HEK293 (cell line): ENCODE measurements at regions of chr18 and their contacts with region 1.

Region 1: GRCh38 chr18:48997985-48998831 is 47.4 kb upstream of the SMAD7 start:
- H3K4me3 ChIP-seq: peak overlapping the region; percentile 5
- H3K27ac ChIP-seq: peak overlapping the region; percentile 73
- H3K4me1 ChIP-seq: peaks cover 38% of the 10 kb centered on the region
- CTCF ChIP-seq: no peak

Region 2: GRCh38 chr18:48940854-48941611 is 57.2 kb before region 1 on chr18:
- CTCF ChIA-PET with region 1: interaction called, 3 read pairs
- POLR2A ChIA-PET with region 1: interaction called, 252 read pairs
- H3K4me3 ChIP-seq: peak overlapping the region; percentile 25
- H3K27ac ChIP-seq: peak overlapping the region; percentile 99
- H3K4me1 ChIP-seq: peaks cover 74% of the 10 kb centered on the region
- CTCF ChIP-seq: no peak

Region 3: DNA sequence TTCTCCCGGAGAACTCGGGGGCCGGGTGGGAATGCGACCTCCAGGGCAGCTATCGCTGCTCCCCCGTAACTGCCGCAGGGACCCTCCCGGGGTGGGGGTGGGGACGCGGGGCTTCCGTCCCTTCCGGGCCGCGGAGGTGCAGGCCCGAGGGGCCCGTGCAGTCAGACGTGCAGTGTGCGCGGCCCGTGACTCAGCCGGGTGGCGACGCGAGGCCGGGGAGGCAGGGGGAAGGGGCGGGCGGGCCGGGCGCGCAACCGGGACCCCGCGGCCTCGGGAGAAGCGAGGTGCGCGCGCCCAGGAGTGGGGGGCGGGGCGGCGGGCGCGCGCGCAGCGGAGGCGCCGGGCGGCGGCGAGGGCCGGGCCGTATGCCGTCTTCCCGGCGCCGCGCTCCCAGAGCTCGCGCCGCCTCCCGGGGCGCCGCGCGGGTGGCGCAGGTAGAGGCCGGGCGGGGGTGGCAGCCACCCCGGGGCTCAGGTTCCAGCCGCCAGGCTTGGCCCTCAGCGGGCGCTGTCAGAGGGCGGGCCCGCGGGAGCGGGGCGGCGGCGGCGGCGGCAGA is 22.5 kb before region 1 on chr18:
- CTCF ChIA-PET with region 1: interaction called, 4 read pairs
- POLR2A ChIA-PET with region 1: interaction called, 13 read pairs
- H3K4me3 ChIP-seq: peak overlapping the region; percentile 41
- H3K27ac ChIP-seq: peak overlapping the region; percentile 97
- H3K4me1 ChIP-seq: peaks cover 12% of the 10 kb centered on the region
- CTCF ChIP-seq: no peak

Region 4: DNA sequence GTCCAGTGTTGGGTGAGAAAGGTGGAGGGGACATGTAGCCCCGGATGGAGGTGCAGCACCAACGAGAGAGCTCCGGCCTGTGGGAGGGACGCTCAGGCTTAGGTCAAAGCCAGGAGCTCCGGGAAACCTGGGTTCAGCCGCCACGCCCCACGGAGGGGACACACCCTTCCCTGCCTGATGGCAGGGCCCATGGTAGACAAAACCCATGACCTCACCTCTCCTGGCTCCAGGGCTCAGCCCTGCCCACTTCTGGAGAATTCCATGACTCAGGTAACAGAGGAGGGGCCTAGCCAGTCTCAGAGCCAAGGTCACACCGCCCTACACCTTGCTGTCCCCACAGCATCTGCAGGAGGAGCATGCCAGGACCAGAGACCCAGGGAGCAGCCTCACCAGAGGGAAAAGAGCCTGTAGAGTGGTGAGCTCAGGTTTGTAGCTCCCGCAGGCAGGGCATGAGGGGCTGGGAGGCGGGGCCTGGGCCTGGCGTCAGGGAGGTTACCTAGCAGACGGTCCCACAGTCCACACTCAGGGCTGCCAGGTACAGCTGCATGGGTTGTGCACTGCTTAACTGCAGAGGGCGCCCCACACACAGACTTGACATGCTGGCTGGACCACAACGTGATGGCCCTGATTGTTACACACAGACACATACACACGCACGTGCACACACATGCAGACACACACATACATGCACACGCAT is 23.4 kb after region 1 on chr18:
- CTCF ChIA-PET with region 1: interaction called, 6 read pairs
- POLR2A ChIA-PET with region 1: interaction called, 27 read pairs
- H3K4me3 ChIP-seq: peak overlapping the region; percentile 32
- H3K27ac ChIP-seq: no peak overlapping the region; the same call in 1 of the 2 replicates
- H3K4me1 ChIP-seq: peaks cover 9% of the 10 kb centered on the region
- CTCF ChIP-seq: peak; percentile 68; the same call in 1 of the 2 replicates

Region 5: DNA sequence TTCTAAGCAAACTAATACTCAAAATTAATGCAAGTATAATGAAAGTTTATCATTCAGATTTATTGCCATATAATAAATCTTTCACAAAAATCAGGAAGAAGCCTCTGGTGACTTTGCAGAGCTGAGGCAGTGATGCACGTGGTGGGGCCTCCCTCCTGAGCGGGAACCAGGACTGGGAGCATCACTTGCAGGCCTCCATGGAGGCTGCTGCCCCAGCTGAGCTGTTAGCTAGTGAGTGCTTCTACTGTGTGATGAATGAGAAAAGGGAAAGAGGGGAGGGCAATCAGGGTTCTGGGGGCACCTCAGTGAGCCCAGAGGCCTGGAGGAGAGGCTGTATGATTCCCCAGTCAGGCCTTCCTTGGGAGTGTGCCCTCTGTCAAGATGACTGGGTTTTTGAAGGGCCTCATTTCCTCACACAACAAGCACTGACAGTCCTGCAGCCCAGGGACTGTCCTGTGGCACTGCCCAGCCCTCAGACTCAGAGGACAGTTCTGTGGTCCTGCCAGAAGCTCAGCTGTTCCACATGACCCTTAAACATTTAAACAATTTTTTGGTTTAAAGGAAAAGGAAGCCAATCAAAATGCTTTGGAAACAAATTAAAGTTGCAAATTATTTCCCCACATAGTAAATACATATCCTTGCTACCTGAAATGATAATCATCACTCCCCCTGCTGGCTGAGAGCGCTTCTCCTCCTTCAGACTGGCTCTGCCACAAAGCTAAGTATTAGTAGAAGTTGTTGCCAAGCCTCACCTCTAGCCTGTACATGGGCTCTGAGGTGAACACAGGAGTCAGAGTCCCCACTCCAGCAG is 43.4 kb after region 1 on chr18:
- CTCF ChIA-PET with region 1: interaction called, 15 read pairs
- POLR2A ChIA-PET with region 1: interaction called, 7 read pairs
- H3K4me3 ChIP-seq: no peak overlapping the region
- H3K27ac ChIP-seq: 0 out of 2 replicates have a peak overlapping the region, but pooled peaks have one; percentile 5
- H3K4me1 ChIP-seq: no peaks in the 10 kb centered on the region
- CTCF ChIP-seq: no peak; the same call in 1 of the 2 replicates